ENCODE measurements at regions of chr16 and their contacts with region 1.

Region 1: DNA sequence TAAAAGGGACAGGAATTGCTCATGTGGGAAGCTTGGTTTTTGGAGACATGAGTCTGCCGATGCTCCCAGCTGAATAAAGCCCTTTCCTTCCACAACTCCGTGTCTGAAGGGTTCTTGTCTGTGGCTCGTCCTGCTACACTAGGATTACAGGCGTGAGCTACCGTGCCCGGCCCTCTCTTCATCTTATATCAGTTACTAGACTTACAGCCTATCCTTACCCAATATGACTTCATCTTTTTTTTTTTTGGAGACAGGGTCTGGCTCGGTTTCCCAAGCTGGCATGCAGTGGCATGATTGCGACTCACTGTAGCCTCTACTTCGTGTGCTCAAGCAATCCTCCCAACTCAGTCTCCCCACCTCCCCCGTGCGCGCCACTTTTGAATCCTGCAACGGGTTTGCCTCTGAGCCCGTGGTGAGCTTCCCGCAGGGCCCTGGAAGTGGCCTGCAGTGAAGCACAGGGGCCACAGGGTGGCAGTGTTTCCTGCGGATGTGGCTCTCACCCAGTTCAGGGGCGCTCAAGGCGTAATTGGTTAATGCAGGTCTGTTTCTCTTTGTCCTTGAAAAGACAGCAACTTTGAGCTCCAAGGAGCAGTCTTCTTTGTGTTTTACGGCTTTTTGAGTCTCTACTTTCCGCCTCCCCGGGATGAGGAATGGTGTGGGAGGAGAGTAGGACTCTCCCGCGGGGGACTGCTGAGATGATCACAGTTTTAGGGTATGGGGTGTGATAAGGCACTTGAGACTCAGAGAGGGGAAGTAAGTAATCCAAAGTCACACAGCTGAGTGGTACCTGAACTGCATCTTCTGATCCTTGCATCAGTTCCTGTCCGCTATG is 22.7 kb upstream of the GPRC5B start:
- DNase-seq: peak; percentile 74 to 81 (median 76)
- ATAC-seq: peak; percentile 88
- H3K4me3 ChIP-seq: no peak overlapping the region
- H3K27ac ChIP-seq: no peak overlapping the region
- H3K4me1 ChIP-seq: peaks cover 7% of the 10 kb centered on the region
- H3K27me3 ChIP-seq: no peaks in the 10 kb centered on the region
- CTCF ChIP-seq: peak; percentile 87 to 99 (median 96)
- POLR2A ChIP-seq: no peak

Region 2: DNA sequence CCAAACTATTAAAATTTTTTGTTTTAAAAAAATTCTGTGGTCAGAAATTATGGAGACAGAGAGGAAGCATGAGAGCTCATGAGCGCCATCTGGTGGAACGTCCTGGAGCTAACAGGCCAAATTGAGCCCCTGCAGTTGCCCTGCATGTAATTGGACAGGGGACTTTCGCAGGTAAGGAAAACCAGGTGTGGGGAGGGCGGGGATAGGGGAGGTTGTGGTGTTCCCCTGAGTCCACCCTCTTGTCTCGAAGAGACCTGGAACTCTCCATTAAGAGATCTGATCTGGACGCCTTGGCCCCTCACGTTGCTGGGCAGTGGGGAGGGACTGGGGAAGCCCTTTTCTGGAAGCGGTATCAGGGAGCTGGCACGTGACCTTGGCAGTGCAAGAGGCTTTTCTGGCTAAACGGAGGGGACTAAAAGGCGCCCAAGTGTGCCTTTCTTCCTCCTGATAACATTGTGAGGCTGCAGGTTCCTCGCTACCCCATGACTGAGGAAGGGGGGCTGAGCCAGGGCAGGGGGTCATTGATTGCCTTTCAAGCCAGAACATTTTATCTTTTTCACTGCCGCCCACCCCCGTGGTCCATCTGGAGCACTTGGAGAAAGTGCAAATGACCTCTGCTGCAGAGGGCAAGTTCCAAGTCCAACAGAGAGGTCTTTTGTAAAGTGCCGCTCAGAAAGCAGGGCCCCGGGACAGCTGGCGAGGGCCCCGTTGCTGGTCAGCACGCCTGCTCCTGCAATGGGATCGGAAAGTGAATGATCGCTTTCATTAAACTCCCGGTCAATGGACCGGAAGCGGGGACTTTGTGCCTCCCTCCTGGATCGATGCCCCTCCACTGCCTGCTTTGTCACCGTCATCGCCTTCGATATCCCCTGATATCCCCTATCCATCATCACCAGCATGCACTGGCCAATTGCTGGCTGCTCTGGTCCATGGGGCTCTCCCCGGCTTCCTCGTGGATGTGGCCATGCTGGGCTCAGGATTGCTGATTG is 478.8 kb after region 1 on chr16:
- intact Hi-C with region 1: loop called (anchors 5 kb)
- DNase-seq: peak; percentile 83 to 91 (median 88)
- ATAC-seq: peak; percentile 78
- H3K4me3 ChIP-seq: no peak overlapping the region
- H3K27ac ChIP-seq: peak overlapping the region in 3 of 4 donors; percentile 53 to 69 (median 53)
- H3K4me1 ChIP-seq: peaks cover 28% of the 10 kb centered on the region
- H3K27me3 ChIP-seq: no peaks in the 10 kb centered on the region
- CTCF ChIP-seq: peak; percentile 75 to 92 (median 83)
- POLR2A ChIP-seq: no peak

Region 3: DNA sequence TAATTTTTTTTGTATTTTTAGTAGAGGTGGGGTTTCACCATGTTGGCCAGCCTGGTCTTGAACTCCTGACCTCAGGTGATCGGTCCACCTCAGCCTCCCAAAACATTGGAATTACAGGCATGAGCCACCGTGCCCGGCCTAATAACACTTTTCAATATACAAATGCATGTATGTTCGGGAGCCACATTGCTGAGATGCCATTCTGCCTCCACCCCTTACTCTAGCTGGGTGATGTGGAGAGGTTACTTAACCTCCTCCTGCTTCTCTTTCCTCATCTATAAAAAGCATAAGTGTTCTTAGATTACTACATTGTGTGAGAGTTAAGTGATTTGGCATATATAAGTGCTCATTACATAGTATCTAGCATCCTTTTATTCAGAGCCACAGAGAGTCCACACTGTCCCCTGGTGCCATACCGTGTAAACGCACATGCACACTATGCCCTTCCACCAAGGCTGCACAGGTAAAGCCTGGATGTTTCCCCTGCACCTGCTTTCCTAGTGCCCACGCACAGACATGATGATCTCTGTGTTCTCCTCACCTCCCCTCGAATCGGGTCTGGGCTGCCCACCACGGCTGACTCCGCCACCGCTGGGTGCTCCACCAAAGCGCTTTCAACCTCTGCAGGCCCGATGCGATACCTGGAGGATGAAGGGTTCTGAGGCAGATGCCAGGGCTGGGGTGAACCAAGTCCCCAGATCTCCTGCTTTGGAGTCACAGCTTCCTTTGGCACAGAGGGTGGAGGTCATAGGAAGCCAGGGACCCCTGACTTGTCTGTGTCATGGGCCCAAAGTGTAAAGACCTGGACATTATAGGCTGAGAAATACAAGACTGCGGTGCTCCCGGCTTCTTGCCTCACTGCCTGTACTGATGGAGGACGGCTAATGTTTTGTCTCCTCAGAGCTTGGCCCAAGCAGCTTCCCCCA is 717.8 kb after region 1 on chr16:
- intact Hi-C with region 1: loop called (anchors 10 kb)
- DNase-seq: no peak
- ATAC-seq: no peak
- H3K4me3 ChIP-seq: no peak overlapping the region
- H3K27ac ChIP-seq: no peak overlapping the region
- H3K4me1 ChIP-seq: no peaks in the 10 kb centered on the region
- H3K27me3 ChIP-seq: no peaks in the 10 kb centered on the region
- CTCF ChIP-seq: peak in 3 of 7 experiments; percentile 13 to 28 (median 16)
- POLR2A ChIP-seq: no peak

Measured in body of pancreas (tissue), 4 donors.